ENCODE measurements at regions of chr14 and their contacts with region 1.

Region 1: GRCh38 chr14:90894241-90894640 is 78.0 kb upstream of the TTC7B start:
- DNase-seq: peak in 1 of 10 donors; percentile 19
- H3K4me3 ChIP-seq: no peak overlapping the region
- H3K27ac ChIP-seq: peak overlapping the region in 29 of 59 donors; percentile 3 to 67 (median 37)
- H3K27me3 ChIP-seq: no peaks in the 10 kb centered on the region
- CTCF ChIP-seq: no peak

Region 2: GRCh38 chr14:90778571-90779240 is 115.5 kb before region 1 on chr14:
- intact Hi-C with region 1: loop called in 1 of 2 experiments (anchors 10 kb)
- DNase-seq: no peak
- H3K4me3 ChIP-seq: no peak overlapping the region
- H3K27ac ChIP-seq: peak overlapping the region in 3 of 59 donors; percentile 10 to 14 (median 13)
- H3K27me3 ChIP-seq: no peaks in the 10 kb centered on the region
- CTCF ChIP-seq: no peak

Region 3: DNA sequence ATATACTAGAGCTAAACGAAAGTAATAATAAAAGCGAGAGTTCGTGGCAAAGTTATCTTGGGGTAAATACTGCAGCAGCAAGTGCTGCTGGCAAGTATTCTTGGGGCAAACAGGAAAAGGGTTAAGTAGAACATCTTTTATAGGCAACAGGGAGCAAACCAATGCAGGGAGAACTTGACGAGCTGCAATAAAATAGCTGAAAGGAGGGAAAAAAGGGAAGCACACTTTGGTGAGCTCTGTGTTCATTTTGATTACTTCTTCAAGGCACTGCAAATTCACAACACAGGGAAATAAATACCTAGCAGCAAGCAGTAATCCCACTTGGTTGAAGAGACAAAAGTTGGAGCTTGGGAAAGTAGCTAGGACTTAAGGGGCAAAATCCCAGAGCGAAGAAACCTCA is 35.7 kb before region 1 on chr14:
- intact Hi-C with region 1: no loop called
- DNase-seq: no peak
- H3K4me3 ChIP-seq: peak overlapping the region in 18 of 59 donors; percentile 2 to 39 (median 12)
- H3K27ac ChIP-seq: peak overlapping the region in 1 of 59 donors; percentile 40
- H3K27me3 ChIP-seq: no peaks in the 10 kb centered on the region
- CTCF ChIP-seq: no peak

Measured in dorsolateral prefrontal cortex (tissue), 120 donors.